PC-3 (cell line): ENCODE measurements at regions of chr10 and their contacts with region 1.

Region 1: DNA sequence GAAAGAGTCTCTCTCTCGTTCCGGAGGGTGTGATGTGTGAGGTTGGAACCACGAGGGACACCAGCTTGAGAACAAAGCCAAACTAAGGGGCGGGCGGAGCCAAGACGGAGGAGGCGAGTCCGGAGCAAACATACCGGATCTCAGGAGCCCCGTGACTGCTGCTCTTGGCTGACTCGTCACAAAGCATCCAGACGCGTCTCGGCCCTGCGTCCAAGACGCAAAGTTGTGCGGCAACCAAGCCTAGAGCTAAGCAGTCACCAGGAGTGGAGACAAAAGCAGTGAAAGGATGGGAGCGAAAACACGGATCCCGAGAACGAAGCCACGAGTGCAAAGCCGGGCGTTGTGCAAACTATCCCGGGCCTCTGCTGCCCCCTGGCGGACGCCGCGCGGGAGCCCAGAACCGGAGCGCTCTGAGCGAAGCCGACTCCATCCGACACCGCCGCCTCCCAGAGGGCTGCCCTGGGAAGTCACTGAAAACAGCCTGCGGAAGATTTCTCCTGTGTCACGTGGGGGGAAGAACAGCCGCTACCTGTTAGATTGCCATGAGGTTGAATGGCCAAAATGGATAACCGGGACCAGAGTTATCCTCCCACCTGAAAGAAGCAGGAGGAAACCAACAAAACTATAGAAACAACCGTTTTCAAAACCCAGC is 46.4 kb upstream of the TMEM72 start:
- DNase-seq: peak; percentile 95
- ATAC-seq: peak; percentile 97
- H3K4me3 ChIP-seq: peak overlapping the region; percentile 63
- H3K27ac ChIP-seq: no peak overlapping the region
- H3K4me1 ChIP-seq: peaks cover 24% of the 10 kb centered on the region
- H3K27me3 ChIP-seq: peaks cover 15% of the 10 kb centered on the region
- CTCF ChIP-seq: peak; percentile 99

Region 2: DNA sequence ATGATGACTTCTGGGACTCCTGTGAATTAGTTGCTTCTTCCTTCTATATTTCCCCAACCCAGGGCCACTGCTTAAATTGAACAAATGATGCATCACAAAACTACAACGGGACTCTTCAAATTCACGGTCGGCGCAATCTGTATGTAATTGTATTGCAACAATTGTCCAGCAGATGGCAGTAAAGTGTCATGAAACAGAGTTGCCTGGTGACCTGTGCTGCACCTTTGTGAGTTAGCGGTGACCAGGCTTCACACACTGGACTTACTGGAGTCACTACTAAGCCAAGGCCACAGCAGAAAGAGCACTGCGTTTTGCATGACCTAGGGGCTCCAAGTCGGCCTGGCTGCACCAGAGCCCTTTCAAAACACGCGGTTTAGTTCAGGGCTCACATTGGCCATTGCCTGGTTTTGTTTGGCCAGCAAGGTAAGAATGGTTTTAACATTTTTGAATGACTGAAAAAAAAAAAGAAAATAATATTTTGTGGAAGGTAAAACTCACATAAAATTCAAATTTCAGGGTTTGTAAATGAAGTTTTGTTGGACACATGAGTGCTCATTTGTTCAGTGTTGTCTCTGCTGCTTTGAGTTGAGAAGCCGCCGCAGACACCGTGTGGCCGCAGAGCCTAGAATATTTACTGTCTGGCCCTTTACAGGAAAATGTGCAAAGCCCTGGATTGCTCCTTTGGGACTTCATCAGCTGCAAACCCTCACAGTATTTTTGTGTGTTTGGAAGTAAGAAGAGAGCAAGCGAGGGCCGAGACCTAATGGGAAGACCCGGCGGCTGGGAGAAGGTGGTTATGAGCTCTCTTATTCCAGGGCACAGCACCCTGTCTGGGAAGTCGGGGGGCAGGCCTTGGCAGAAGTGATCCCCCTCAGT is 1192.9 kb before region 1 on chr10:
- CTCF ChIA-PET with region 1: no interaction called
- POLR2A ChIA-PET with region 1: no interaction called
- intact Hi-C with region 1: loop called (anchors 1 kb)
- DNase-seq: peak; percentile 88
- ATAC-seq: peak; percentile 90
- H3K4me3 ChIP-seq: no peak overlapping the region
- H3K27ac ChIP-seq: no peak overlapping the region
- H3K4me1 ChIP-seq: no peaks in the 10 kb centered on the region
- H3K27me3 ChIP-seq: peaks cover 26% of the 10 kb centered on the region
- CTCF ChIP-seq: peak; percentile 96

Region 3: GRCh38 chr10:44689368-44689767 is 175.4 kb before region 1 on chr10:
- CTCF ChIA-PET with region 1: no interaction called
- POLR2A ChIA-PET with region 1: no interaction called
- intact Hi-C with region 1: no loop called
- DNase-seq: peak; percentile 34
- ATAC-seq: no peak
- H3K4me3 ChIP-seq: no peak overlapping the region
- H3K27ac ChIP-seq: no peak overlapping the region
- H3K4me1 ChIP-seq: no peaks in the 10 kb centered on the region
- H3K27me3 ChIP-seq: no peaks in the 10 kb centered on the region
- CTCF ChIP-seq: peak; percentile 50

Region 4: GRCh38 chr10:44801383-44802327 is 63.1 kb before region 1 on chr10:
- CTCF ChIA-PET with region 1: no interaction called
- POLR2A ChIA-PET with region 1: no interaction called
- intact Hi-C with region 1: no loop called
- DNase-seq: peak; percentile 97
- ATAC-seq: no peak
- H3K4me3 ChIP-seq: no peak overlapping the region
- H3K27ac ChIP-seq: peak overlapping the region; percentile 27
- H3K4me1 ChIP-seq: peaks cover 15% of the 10 kb centered on the region
- H3K27me3 ChIP-seq: no peaks in the 10 kb centered on the region
- CTCF ChIP-seq: no peak

Region 5: DNA sequence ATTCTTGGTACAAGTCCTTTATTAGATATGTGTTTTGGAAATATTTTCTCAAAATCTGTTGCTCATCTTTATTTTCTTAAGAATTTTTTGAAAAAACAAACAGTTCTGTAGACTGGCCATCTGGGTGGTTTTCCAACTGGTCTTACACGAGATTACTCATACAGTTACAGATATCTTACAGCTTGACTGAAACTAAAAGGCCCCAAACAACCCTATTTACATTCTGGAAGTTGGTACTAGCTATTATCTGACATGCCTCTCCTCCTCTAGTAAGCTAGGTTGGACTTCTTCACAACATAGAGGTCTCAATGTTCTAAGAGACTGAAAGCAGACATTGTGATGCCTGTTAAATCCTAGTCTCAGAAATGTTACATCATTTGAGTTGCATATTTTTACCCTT is 187.9 kb after region 1 on chr10:
- CTCF ChIA-PET with region 1: no interaction called
- POLR2A ChIA-PET with region 1: no interaction called
- intact Hi-C with region 1: no loop called
- DNase-seq: no peak
- ATAC-seq: no peak
- H3K4me3 ChIP-seq: no peak overlapping the region
- H3K27ac ChIP-seq: no peak overlapping the region
- H3K4me1 ChIP-seq: no peaks in the 10 kb centered on the region
- H3K27me3 ChIP-seq: peaks cover 40% of the 10 kb centered on the region
- CTCF ChIP-seq: no peak